ENCODE measurements at regions of chrX and their contacts with region 1.

Region 1: DNA sequence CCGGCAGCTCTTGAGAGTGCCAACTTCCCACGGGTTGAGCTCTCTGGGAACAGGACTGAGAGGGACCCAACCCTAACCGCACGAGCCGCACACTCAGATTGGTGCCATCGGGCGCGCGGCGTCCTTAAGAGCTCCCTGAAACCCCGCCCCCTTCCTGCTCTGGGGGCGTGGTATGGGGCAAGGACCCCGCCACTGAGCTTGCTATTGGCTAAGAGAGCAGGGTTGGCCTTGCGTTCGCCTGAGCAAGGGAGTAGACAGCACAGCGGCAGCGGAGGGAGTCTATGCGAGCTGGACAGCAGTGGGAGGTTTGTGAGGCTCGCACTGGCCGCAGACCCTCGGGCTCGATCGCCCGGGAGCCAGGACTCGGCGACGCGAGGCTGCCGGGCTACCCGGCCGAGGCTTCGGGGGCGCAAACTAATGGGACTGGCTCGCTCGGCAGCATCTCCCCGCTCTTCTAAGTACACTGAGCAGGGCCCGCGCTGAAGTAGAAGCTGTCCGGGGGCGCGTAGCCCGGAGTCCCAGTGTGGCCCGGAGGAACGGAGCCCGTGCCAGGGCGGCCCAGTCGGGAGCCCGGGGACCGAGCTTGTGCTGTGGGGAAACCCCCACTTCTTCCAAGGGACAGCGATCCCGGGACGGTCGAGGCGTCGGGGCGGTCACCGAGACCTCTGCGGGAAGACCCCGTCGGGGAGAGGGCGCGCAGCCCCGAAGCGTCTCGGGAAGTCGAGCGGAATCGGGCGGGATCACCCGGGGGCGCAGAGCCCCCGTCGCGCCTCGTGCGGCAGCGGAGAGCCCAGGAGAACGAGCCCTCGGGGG is at the start of gene EFNB1:
- DNase-seq: peak; percentile 89
- H3K4me3 Mint-ChIP-seq: peak within 1 kb of the TSS; percentile 80
- H3K27ac Mint-ChIP-seq: peak within 1 kb of the TSS; percentile 65
- H3K4me1 Mint-ChIP-seq: peaks cover 18% of the 10 kb centered on the region
- H3K27me3 Mint-ChIP-seq: no peaks in the 10 kb centered on the region
- total RNA-seq, gene EFNB1: 4.6 to 4.8 TPM

Region 2: DNA sequence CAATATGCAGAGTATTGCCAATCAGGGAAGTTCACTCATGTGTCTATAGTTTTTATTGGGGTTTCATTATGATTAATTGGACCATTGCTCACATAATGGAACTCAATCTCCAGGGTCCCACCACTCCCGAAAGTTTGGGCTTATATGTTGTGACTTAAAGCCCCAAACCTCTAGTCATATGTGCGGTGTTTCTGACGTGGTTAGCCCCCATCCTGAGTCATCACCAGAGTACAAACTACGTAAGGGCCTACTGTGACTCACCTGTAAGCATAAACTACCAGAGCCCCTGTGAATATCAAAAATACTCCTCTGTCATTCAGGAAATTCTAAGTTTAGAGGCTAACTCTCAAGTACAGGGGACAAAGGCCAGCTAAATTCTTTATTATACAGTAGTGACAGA is 324.7 kb before region 1 on chrX:
- CTCF ChIA-PET with region 1: no interaction called
- POLR2A ChIA-PET with region 1: no interaction called
- intact Hi-C with region 1: loop called (anchors 5 kb)
- DNase-seq: peak; percentile 83
- H3K4me3 Mint-ChIP-seq: no peak overlapping the region
- H3K27ac Mint-ChIP-seq: peak overlapping the region; percentile 85
- H3K4me1 Mint-ChIP-seq: peaks cover 64% of the 10 kb centered on the region
- H3K27me3 Mint-ChIP-seq: no peaks in the 10 kb centered on the region

Region 3: GRCh38 chrX:68794461-68794860 is 34.5 kb before region 1 on chrX:
- CTCF ChIA-PET with region 1: no interaction called
- POLR2A ChIA-PET with region 1: no interaction called
- intact Hi-C with region 1: no loop called
- DNase-seq: no peak
- H3K4me3 Mint-ChIP-seq: no peak overlapping the region
- H3K27ac Mint-ChIP-seq: no peak overlapping the region
- H3K4me1 Mint-ChIP-seq: peaks cover 1% of the 10 kb centered on the region
- H3K27me3 Mint-ChIP-seq: no peaks in the 10 kb centered on the region

Region 4: GRCh38 chrX:69165087-69165651 is 336.2 kb after region 1 on chrX and contains the start of gene PJA1:
- CTCF ChIA-PET with region 1: interaction called, 11 read pairs
- POLR2A ChIA-PET with region 1: no interaction called
- intact Hi-C with region 1: loop called (anchors 2 kb)
- DNase-seq: peak; percentile 81
- H3K4me3 Mint-ChIP-seq: peak within 1 kb of the TSS; percentile 73
- H3K27ac Mint-ChIP-seq: peak within 1 kb of the TSS; percentile 81
- H3K4me1 Mint-ChIP-seq: peaks cover 36% of the 10 kb centered on the region
- H3K27me3 Mint-ChIP-seq: no peaks in the 10 kb centered on the region
- total RNA-seq, gene PJA1: 20.7 to 22.1 TPM

Region 5: GRCh38 chrX:69285881-69286564 is 457.1 kb after region 1 on chrX:
- CTCF ChIA-PET with region 1: interaction called, 4 read pairs
- POLR2A ChIA-PET with region 1: interaction called, 4 read pairs
- intact Hi-C with region 1: loop called (anchors 2 kb)
- DNase-seq: peak; percentile 56
- H3K4me3 Mint-ChIP-seq: no peak overlapping the region
- H3K27ac Mint-ChIP-seq: no peak overlapping the region
- H3K4me1 Mint-ChIP-seq: no peaks in the 10 kb centered on the region
- H3K27me3 Mint-ChIP-seq: no peaks in the 10 kb centered on the region

Region 6: GRCh38 chrX:69615779-69616456 is 787.0 kb after region 1 on chrX and contains the start of gene EDA:
- CTCF ChIA-PET with region 1: no interaction called
- POLR2A ChIA-PET with region 1: no interaction called
- intact Hi-C with region 1: loop called (anchors 5 kb)
- DNase-seq: peak; percentile 80
- H3K4me3 Mint-ChIP-seq: peak within 1 kb of the TSS; percentile 79
- H3K27ac Mint-ChIP-seq: no peak within 1 kb of the TSS
- H3K4me1 Mint-ChIP-seq: peaks cover 19% of the 10 kb centered on the region
- H3K27me3 Mint-ChIP-seq: peaks cover 4% of the 10 kb centered on the region
- total RNA-seq, gene EDA: 3.3 to 4.2 TPM